PC-9 (cell line): ENCODE measurements at regions of chr4 and their contacts with region 1.

Region 1: GRCh38 chr4:26010304-26010703 is 96.3 kb downstream of the SMIM20 start:
- DNase-seq: no peak
- H3K4me3 ChIP-seq: no peak overlapping the region
- H3K27ac ChIP-seq: no peak overlapping the region
- H3K4me1 ChIP-seq: no peaks in the 10 kb centered on the region
- H3K27me3 ChIP-seq: no peaks in the 10 kb centered on the region
- CTCF ChIP-seq: no peak

Region 2: DNA sequence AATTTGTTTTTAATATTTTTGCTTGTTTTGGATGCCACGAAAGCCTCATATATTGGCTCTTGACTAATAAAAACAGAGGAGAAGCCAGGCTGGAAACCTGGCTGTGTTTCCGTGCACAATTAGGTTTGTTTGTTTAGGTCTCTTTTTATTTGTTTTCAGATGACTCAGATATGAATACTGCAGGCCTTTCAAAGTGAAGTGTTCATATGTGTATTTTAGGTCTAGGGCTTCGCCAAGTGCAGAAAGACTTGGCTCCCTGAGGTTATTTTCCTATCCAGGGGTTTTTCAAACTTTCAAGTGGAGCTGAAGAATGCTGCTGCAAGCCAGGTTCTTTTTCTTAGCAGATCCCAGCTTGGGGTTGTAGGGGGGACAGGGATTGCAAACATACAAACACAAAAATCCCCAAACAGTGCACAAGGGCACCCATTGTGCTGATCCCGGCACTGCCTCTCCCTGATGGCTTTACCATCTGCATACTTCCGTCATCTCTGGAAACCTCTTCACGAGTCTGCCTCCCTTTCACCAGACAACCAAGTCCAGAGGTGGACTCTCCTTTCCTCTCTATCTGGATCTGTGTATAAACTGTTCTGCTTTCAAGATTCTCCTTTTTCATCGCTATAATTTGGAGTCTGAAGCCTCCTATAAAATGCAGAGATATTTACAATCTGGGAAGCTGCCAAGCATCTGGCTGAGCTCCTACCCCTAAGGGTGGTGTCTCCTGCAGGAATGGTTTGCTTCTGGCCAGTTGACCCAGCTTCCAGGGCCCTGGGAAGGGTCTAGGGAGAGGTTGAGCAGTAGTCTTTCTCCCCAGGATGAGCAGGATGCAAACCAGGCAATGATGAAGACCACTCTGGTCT is 12.3 kb after region 1 on chr4:
- CTCF ChIA-PET with region 1: no interaction called
- POLR2A ChIA-PET with region 1: interaction called, 10 read pairs
- intact Hi-C with region 1: no loop called
- DNase-seq: peak in 1 of 2 experiments; percentile 81
- H3K4me3 ChIP-seq: peak overlapping the region; percentile 38; the same call in 1 of the 2 replicates
- H3K27ac ChIP-seq: peak overlapping the region; percentile 36; the same call in 1 of the 2 replicates
- H3K4me1 ChIP-seq: peaks cover 29% of the 10 kb centered on the region
- H3K27me3 ChIP-seq: no peaks in the 10 kb centered on the region; the same call in 1 of the 2 replicates
- CTCF ChIP-seq: no peak